ENCODE measurements at regions of chr6 and their contacts with region 1.

Region 1: DNA sequence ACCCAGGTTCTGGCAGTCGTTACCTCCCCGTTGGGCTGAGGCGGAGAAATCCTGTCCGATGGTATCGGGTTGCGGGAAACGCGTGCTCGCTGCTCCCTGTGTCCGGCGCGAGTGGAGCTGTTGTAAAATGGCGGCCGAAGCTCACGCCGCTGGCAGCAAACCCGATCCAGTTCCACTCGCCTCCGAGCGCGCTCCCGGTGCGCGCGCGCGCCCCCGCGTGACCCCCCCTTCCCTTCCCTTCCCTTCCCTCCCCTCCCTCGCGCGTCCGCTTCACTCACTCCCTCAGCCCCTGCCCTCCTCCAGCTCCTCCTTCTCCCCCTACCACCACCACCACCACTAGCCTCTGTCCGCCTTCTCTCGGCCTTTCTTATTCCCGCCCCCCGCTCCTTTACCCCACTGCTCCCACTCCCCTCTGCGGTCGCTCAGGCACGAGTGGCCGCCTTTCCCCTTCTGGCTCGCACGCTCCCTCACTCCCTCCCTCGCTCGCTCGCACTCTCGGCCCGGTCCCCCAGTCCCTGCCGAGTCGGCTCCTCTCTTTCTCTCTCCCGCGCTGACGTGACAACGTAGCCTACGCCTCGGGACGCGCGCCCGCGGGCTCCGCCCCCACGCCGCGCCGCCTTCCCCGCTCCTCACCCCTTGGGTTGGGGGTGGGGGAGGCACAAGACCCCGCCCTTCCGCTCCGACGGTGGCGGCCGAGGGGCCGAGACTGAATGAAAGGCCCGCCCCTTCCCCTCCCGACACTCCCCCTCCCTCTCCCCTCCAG is at the start of gene SYNCRIP:
- DNase-seq: peak; percentile 96
- H3K4me3 ChIP-seq: peak within 1 kb of the TSS; percentile 99
- H3K27ac ChIP-seq: peak within 1 kb of the TSS; percentile 100
- H3K27me3 ChIP-seq: no peaks in the 10 kb centered on the region
- CTCF ChIP-seq: no peak
- polyA plus RNA-seq, gene SYNCRIP: 38.5 and 40.4 TPM in 2 replicates

Region 2: DNA sequence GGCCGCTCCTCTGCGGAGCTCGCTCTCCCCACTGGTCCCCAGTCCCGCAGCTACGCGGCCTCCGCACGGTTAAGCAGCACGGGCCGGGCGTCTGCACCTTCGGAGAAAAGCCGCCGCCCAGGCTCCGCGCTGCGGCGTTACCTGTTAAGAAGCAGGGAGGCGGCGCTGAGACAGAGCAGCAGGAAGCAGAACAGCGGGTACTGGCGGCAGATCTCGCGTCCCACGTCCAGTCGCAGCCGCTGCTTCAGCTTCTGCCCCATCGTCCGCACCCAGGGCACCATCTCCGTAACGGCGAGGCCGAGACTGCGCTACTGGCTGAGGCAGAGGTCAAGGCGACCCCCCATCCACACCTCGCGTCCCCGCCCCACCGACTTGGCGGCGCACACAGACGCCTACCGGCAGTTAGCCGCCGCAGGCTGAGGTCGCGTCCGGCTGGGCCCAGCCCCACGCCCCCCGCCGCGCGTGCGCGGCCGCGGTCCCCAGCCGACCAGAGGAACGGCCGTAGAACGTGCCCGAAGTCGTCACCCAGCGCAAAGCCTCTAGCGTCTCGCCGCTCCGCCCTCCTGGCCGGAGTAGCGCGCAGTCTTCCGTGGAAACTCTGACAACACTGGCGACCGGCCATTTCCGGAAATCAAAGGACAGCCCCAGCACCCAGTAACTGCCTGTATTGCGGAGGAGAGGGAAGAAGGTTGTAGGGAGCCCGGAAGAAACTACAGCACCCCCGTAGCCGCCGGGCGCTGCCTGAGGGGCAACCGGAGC is 49.3 kb before region 1 on chr6 and contains the start of gene SNX14:
- CTCF ChIA-PET with region 1: interaction called, 3 read pairs
- POLR2A ChIA-PET with region 1: interaction called, 14 read pairs
- DNase-seq: peak; percentile 88
- H3K4me3 ChIP-seq: peak within 1 kb of the TSS; percentile 91
- H3K27ac ChIP-seq: peak within 1 kb of the TSS; percentile 90
- H3K27me3 ChIP-seq: no peaks in the 10 kb centered on the region
- CTCF ChIP-seq: no peak
- polyA plus RNA-seq, gene SNX14: 77.0 and 114 TPM in 2 replicates

Region 3: DNA sequence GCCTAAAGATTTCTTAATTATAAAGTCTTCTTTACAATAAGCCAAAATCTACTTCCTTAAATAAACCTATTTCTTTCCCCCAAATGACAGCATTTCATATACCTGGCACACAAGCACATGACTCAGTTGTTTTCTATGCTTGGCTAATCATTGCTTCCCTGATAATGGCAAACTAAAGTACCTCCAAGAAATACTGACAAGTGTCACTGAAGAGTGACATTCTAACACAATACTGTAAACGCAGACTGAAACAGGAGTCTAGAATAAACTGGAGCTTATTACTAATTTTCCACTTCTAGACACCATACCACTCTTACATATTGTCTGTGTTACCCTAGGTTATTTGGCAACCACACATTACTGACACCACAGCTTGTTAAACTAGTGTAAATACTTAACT is 14.6 kb before region 1 on chr6:
- CTCF ChIA-PET with region 1: no interaction called
- POLR2A ChIA-PET with region 1: interaction called, 15 read pairs
- DNase-seq: no peak
- H3K4me3 ChIP-seq: no peak overlapping the region
- H3K27ac ChIP-seq: no peak overlapping the region
- H3K27me3 ChIP-seq: no peaks in the 10 kb centered on the region
- CTCF ChIP-seq: no peak

Region 4: DNA sequence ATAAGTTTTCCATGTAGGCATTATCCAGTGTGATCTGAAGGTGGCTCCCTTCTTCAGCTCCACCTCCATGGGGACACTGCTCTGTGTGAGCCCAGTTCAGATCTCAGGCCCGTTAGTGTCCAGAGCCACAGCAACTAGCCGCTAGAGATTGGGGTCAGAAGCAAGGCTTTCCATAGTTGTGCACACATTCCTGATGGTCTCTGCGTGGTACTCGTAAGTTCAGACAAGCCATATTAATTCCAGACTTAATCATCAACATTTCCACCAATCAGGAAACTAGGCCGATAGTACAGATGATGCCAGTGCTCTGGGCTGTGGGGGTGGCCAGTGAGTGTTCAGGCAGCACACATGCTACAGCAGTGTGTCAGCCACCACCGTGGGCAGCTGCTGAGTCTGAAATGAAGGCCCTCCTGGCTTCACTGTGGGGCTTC is 17.2 kb after region 1 on chr6:
- CTCF ChIA-PET with region 1: no interaction called
- POLR2A ChIA-PET with region 1: interaction called, 24 read pairs
- DNase-seq: peak; percentile 82
- H3K4me3 ChIP-seq: peak overlapping the region; percentile 43
- H3K27ac ChIP-seq: peak overlapping the region; percentile 87
- H3K27me3 ChIP-seq: no peaks in the 10 kb centered on the region
- CTCF ChIP-seq: peak; percentile 42

Region 5: GRCh38 chr6:85669735-85670194 is 26.8 kb after region 1 on chr6:
- CTCF ChIA-PET with region 1: interaction called, 3 read pairs
- POLR2A ChIA-PET with region 1: interaction called, 582 read pairs
- DNase-seq: no peak
- H3K4me3 ChIP-seq: no peak overlapping the region
- H3K27ac ChIP-seq: no peak overlapping the region
- H3K27me3 ChIP-seq: no peaks in the 10 kb centered on the region
- CTCF ChIP-seq: no peak